ENCODE measurements at regions of chr1 and their contacts with region 1.

Region 1: DNA sequence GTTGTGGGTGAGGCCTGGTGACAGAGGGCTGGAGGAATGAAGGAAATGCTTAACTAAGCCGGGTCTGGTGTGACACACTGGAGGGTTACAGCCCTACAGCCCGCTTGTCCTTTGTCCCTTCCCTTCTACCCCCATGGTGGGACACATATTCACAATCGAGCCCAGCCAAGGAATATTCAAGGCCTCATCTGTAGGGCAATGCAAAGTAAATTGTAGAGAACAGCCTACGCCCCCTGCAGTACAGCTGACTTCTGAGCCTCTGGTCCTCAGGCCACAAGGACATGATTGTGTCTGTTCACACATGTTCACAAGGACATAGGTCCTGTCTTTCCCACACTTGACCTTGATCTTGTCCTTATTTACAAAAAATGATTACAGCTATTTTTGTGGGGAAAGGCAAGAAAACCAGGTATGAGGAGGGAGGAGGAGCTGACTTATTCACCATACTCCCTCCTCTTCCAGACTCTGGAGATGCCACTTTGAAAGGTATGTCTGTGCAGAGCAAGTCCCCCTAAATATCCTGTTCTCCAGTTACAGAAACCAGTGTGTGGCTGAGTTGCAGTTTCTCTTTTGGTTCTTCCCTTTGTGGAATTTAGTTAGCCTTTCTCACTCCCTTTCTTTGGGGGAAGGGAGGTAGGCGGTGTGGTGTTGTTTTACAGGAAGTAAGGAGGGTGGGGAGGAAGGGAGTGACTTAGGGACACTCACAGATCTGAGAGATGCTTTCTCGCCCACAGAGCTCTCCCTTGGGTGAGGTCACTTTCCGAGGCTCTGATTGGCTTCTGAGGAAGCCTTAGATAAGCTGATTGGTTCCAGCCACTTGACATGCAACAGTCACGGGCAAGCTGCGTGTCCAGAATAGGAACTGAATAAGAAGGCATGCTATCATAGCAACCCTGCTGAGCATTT is 14.6 kb downstream of the POLR3GL start:
- DNase-seq: peak; percentile 31 to 87 (median 71)
- ATAC-seq: peak; percentile 89
- H3K4me3 ChIP-seq: peak overlapping the region; percentile 64
- H3K4me3 Mint-ChIP-seq: no peak overlapping the region
- H3K27ac ChIP-seq: peak overlapping the region; percentile 82
- H3K27ac Mint-ChIP-seq: no peak overlapping the region
- H3K4me1 ChIP-seq: peaks cover 67 to 68% of the 10 kb centered on the region in 2 donors
- H3K4me1 Mint-ChIP-seq: peaks cover 12 to 37% (median 16%) of the 10 kb centered on the region in 7 donors
- H3K27me3 ChIP-seq: no peaks in the 10 kb centered on the region
- H3K27me3 Mint-ChIP-seq: no peaks in the 10 kb centered on the region

Region 2: GRCh38 chr1:145601593-145601992 is 377.5 kb before region 1 on chr1:
- CTCF ChIA-PET with region 1: no interaction called
- POLR2A ChIA-PET with region 1: no interaction called
- intact Hi-C with region 1: no loop called
- DNase-seq: no peak
- ATAC-seq: no peak
- H3K4me3 ChIP-seq: no peak overlapping the region
- H3K4me3 Mint-ChIP-seq: no peak overlapping the region
- H3K27ac ChIP-seq: no peak overlapping the region
- H3K27ac Mint-ChIP-seq: no peak overlapping the region
- H3K4me1 ChIP-seq: no peaks in the 10 kb centered on the region
- H3K4me1 Mint-ChIP-seq: peaks cover 0 to 3% (median 0%) of the 10 kb centered on the region in 7 donors
- H3K27me3 ChIP-seq: no peaks in the 10 kb centered on the region
- H3K27me3 Mint-ChIP-seq: peaks cover 4 to 25% (median 9%) of the 10 kb centered on the region in 5 donors

Region 3: GRCh38 chr1:145891587-145892485 is 87.3 kb before region 1 on chr1:
- CTCF ChIA-PET with region 1: interaction called, 4 read pairs
- POLR2A ChIA-PET with region 1: interaction called, 4 read pairs
- intact Hi-C with region 1: loop called in 1 of 2 experiments (anchors 1 kb)
- DNase-seq: peak; percentile 11 to 61 (median 33)
- ATAC-seq: peak; percentile 76
- H3K4me3 ChIP-seq: no peak overlapping the region
- H3K4me3 Mint-ChIP-seq: no peak overlapping the region
- H3K27ac ChIP-seq: no peak overlapping the region
- H3K27ac Mint-ChIP-seq: peak overlapping the region in 1 of 9 donors; percentile 36
- H3K4me1 ChIP-seq: no peaks in the 10 kb centered on the region
- H3K4me1 Mint-ChIP-seq: peaks cover 0 to 5% (median under 1%) of the 10 kb centered on the region in 7 donors
- H3K27me3 ChIP-seq: no peaks in the 10 kb centered on the region
- H3K27me3 Mint-ChIP-seq: peaks cover 0 to 5% (median 0%) of the 10 kb centered on the region in 5 donors

Region 4: DNA sequence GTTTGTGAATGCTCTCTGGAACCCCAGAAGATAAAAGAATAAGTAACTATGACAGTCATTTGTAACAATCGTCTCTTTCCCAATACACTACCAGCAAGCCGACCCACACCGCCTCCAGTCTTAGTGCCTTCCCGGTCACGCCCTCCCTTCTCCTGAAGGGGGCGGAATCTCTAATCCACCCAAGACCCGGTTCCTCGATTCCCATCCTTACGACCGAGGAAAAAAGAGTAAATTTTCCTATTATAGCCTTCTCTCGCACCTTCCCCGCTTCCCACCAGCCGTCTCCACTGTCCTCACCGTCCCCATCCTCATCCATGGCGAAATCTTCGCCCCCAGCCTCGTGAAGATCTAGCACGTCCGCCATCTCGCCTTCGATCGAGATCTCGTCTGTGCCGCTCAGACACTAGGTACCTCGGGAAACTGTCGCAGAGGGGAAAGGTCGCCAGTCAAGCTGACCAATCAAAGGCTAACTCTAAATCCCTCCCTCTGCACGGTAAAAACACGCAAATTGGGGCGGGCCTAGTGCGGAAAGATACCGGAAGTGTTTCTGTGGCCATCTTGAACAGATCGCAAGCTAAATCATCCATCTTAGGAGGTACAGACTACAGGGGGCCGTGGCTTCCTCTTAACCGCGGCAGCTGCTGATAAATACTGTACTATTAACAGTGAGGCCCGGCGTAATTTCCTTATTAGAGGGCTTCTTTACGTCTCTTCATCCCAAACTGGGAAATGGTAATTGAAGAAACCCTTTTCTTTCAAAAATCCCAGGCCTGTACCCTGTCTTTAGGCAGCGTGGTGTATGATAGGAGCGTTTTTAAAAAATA is 51.8 kb before region 1 on chr1 and contains the start of gene RBM8A:
- CTCF ChIA-PET with region 1: interaction called, 3 read pairs
- POLR2A ChIA-PET with region 1: interaction called, 36 read pairs
- intact Hi-C with region 1: loop called in 1 of 2 experiments (anchors 1 kb)
- DNase-seq: peak; percentile 70 to 98 (median 96)
- ATAC-seq: peak; percentile 98
- H3K4me3 ChIP-seq: peak within 1 kb of the TSS; percentile 98
- H3K4me3 Mint-ChIP-seq: peak within 1 kb of the TSS in 4 of 10 donors; percentile 48 to 85 (median 75)
- H3K27ac ChIP-seq: peak within 1 kb of the TSS; percentile 100
- H3K27ac Mint-ChIP-seq: peak within 1 kb of the TSS in 3 of 9 donors; percentile 56 to 95 (median 94)
- H3K4me1 ChIP-seq: peaks cover 26 to 28% of the 10 kb centered on the region in 2 donors
- H3K4me1 Mint-ChIP-seq: peaks cover 11 to 33% (median 23%) of the 10 kb centered on the region in 7 donors
- H3K27me3 ChIP-seq: no peaks in the 10 kb centered on the region
- H3K27me3 Mint-ChIP-seq: no peaks in the 10 kb centered on the region
- total RNA-seq, gene RBM8A: 115 to 182 (median 120) TPM

Region 5: DNA sequence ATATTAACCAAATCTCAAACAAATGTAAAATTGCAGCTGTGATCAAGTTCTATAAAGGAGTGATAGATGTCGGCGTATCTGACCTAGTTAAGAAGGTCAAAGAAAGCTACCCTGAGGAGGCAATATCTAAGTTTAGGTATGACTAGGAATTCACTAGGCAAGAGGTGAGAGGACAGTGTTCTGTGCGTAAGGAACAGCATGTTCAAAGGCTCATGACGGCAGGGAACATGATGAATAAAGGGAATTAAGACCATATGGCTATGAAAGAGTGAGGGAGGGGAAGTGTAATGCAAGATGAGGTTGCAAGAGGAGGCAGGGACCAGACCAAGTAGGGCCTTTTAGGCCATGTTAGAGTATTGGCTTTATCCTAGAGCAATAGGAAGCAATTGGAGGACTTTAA is 29.9 kb before region 1 on chr1:
- CTCF ChIA-PET with region 1: no interaction called
- POLR2A ChIA-PET with region 1: no interaction called
- intact Hi-C with region 1: no loop called
- DNase-seq: no peak
- ATAC-seq: no peak
- H3K4me3 ChIP-seq: no peak overlapping the region
- H3K4me3 Mint-ChIP-seq: peak overlapping the region in 2 of 10 donors; percentile 1 to 3
- H3K27ac ChIP-seq: no peak overlapping the region
- H3K27ac Mint-ChIP-seq: peak overlapping the region in 6 of 9 donors; percentile 9 to 80 (median 58)
- H3K4me1 ChIP-seq: peaks cover 13 to 28% of the 10 kb centered on the region in 2 donors
- H3K4me1 Mint-ChIP-seq: peaks cover 34 to 71% (median 57%) of the 10 kb centered on the region in 7 donors
- H3K27me3 ChIP-seq: no peaks in the 10 kb centered on the region
- H3K27me3 Mint-ChIP-seq: no peaks in the 10 kb centered on the region

Region 6: GRCh38 chr1:145963995-145964901 is 14.9 kb before region 1 on chr1 and contains the starts of genes ANKRD34A and POLR3GL:
- CTCF ChIA-PET with region 1: interaction called, 56 read pairs
- POLR2A ChIA-PET with region 1: interaction called, 89 read pairs
- intact Hi-C with region 1: loop called (anchors 1 kb)
- DNase-seq: peak; percentile 71 to 94 (median 89)
- ATAC-seq: peak; percentile 96
- H3K4me3 ChIP-seq: peak within 1 kb of the TSS; percentile 87
- H3K4me3 Mint-ChIP-seq: peak within 1 kb of the TSS; percentile 88 to 99 (median 96)
- H3K27ac ChIP-seq: peak within 1 kb of the TSS; percentile 84
- H3K27ac Mint-ChIP-seq: peak within 1 kb of the TSS; percentile 87 to 98 (median 92)
- H3K4me1 ChIP-seq: peaks cover 14 to 31% of the 10 kb centered on the region in 2 donors
- H3K4me1 Mint-ChIP-seq: peaks cover 38 to 62% (median 57%) of the 10 kb centered on the region in 7 donors
- H3K27me3 ChIP-seq: no peaks in the 10 kb centered on the region
- H3K27me3 Mint-ChIP-seq: peaks cover 0 to 4% (median 0%) of the 10 kb centered on the region in 5 donors
- total RNA-seq, gene ANKRD34A: 0.54 to 1.5 (median 1.2) TPM
- total RNA-seq, gene POLR3GL: 20.7 to 37.5 (median 25.5) TPM

Region 7: GRCh38 chr1:146001709-146002108 is 22.6 kb after region 1 on chr1:
- CTCF ChIA-PET with region 1: interaction called, 233 read pairs
- POLR2A ChIA-PET with region 1: interaction called, 1,779 read pairs
- intact Hi-C with region 1: loop called (anchors 1 kb)
- DNase-seq: no peak
- ATAC-seq: no peak
- H3K4me3 ChIP-seq: no peak overlapping the region
- H3K4me3 Mint-ChIP-seq: peak overlapping the region in 9 of 10 donors; percentile 26 to 77 (median 64)
- H3K27ac ChIP-seq: peak overlapping the region; percentile 55
- H3K27ac Mint-ChIP-seq: peak overlapping the region; percentile 20 to 97 (median 95)
- H3K4me1 ChIP-seq: peaks cover 53 to 72% of the 10 kb centered on the region in 2 donors
- H3K4me1 Mint-ChIP-seq: peaks cover 51 to 80% (median 72%) of the 10 kb centered on the region in 7 donors
- H3K27me3 ChIP-seq: no peaks in the 10 kb centered on the region
- H3K27me3 Mint-ChIP-seq: no peaks in the 10 kb centered on the region

Region 8: GRCh38 chr1:146012737-146013403 is 33.8 kb after region 1 on chr1:
- CTCF ChIA-PET with region 1: interaction called, 233 read pairs
- POLR2A ChIA-PET with region 1: interaction called, 1,779 read pairs
- intact Hi-C with region 1: loop called (anchors 1 kb)
- DNase-seq: peak in 7 of 9 donors; percentile 60 to 77 (median 65)
- ATAC-seq: peak; percentile 73
- H3K4me3 ChIP-seq: no peak overlapping the region
- H3K4me3 Mint-ChIP-seq: peak overlapping the region in 1 of 10 donors; percentile 53
- H3K27ac ChIP-seq: no peak overlapping the region
- H3K27ac Mint-ChIP-seq: no peak overlapping the region
- H3K4me1 ChIP-seq: peaks cover 0 to 1% of the 10 kb centered on the region in 2 donors
- H3K4me1 Mint-ChIP-seq: peaks cover 4 to 12% (median 10%) of the 10 kb centered on the region in 7 donors
- H3K27me3 ChIP-seq: no peaks in the 10 kb centered on the region
- H3K27me3 Mint-ChIP-seq: peaks cover 3 to 32% (median 4%) of the 10 kb centered on the region in 5 donors

Measured in naive thymus-derived CD4-positive, alpha-beta T cell (primary cell).